Right ventricle myocardium inferior (tissue), 1 donor: ENCODE measurements at regions of chr7 and their contacts with region 1.

Region 1: DNA sequence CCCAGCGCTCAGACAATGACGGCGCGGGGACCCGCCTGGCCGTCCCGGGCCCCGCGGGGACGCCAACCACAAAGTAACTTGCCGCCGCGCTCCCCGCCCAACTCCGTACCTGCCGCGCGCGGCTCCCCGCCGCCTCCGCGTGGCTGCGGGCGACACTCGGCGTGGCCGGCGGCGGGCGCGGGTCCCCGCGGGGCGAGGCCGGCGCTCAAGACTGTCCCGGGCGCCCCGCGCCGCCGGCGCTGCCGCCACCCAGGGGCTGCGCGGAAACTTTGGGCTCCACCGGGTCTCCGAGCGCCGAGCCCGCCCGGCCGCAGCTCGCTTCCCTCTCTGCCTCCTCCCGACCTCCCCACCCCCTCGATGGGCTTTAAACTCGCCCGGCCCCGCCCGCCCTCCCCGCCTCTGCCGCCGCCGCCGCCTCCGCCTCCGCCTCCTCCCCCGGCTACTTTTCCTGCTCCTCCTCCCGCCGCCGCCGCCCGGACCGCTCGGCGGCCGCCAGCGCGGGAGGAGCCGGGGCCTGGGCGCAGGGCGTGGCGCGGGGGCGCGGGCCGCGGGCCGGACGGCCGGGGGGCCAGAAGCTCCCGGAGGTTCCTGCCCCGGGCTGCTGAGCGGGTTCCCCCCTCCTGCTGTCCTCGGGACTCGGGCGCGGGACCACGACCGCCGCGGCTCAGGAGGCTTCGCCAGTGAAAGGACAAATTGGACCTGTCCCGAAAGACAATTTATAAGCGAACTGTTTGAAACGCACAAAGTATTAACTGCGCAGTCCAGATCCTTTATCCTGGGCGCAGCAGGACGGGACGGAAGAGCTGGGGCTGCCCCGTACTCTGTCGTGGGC is 10.6 kb upstream of the GRB10 start:
- DNase-seq: peak; percentile 82
- ATAC-seq: peak; percentile 90

Region 2: GRCh38 chr7:50449881-50450589 is 343.3 kb before region 1 on chr7 and contains the start of gene FIGNL1:
- intact Hi-C with region 1: loop called (anchors 10 kb)
- DNase-seq: peak; percentile 92
- ATAC-seq: peak; percentile 99
- total RNA-seq, gene FIGNL1: 3.4 TPM

Region 3: DNA sequence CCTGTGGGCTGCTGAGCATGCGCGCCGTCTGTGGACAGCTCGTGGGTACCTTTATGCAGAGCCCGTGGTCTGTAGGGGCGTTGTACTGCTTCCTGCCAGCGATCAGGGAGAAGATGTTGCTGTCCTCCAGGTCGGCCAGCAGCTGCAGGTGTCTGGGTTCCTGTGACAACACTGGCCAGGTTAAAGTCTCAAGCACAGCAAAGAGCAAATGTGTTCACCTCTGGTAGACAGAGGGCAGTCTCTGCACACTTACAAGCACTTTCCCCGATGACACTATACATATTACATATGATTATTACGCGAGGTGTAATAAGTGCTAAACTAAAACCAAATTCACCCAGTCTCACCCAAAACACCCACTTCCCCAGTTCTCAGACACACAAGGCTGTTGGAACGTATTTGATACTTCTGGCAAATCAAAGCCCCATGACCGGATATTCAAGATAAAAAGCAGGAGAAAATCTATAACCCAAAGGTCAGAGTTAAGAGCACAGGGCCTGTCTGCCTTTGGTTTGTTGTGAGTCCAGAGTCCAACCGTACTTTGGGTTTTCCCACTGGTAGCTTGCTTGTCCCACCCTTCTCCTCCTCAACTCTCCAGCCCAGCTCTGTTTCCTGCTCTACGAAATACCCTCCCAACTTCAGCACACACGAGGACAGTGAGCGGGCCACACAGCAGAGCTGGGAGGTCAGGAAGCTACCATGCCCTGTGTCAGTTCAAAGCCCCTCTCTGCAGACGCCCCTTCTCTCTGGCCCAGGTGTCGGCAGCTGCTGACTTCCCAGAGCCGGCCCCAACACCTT is 178.4 kb before region 1 on chr7:
- intact Hi-C with region 1: loop called (anchors 5 kb)
- DNase-seq: no peak
- ATAC-seq: peak; percentile 47

Region 4: GRCh38 chr7:50687575-50688225 is 105.6 kb before region 1 on chr7:
- intact Hi-C with region 1: loop called (anchors 5 kb)
- DNase-seq: no peak
- ATAC-seq: peak; percentile 74

Region 5: GRCh38 chr7:50721165-50721564 is 72.2 kb before region 1 on chr7:
- intact Hi-C with region 1: loop called (anchors 5 kb)
- DNase-seq: no peak
- ATAC-seq: no peak

Region 6: GRCh38 chr7:50739744-50740435 is 53.4 kb before region 1 on chr7:
- intact Hi-C with region 1: no loop called
- DNase-seq: no peak
- ATAC-seq: no peak

Region 7: DNA sequence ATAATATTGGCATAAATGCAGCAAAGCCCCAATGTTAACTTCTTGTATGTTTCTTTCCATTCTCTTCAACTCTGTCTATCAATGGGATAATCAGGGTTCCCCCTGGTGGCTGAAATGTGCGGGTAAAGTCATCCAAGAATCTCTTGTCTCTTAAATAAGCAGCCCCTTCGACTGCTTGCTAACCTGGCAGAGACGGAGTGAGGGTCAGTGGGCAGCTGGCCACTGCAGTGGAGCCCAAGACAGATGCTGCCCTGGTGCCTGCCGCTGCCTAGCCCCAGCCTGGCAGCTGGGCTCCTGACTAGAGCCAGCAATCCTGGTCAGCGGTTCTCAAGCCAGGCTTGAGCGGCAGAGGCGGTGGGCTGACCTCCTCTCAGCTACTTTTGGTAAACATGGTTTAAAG is 274.4 kb after region 1 on chr7:
- intact Hi-C with region 1: loop called (anchors 5 kb)
- DNase-seq: no peak
- ATAC-seq: peak; percentile 23

Region 8: DNA sequence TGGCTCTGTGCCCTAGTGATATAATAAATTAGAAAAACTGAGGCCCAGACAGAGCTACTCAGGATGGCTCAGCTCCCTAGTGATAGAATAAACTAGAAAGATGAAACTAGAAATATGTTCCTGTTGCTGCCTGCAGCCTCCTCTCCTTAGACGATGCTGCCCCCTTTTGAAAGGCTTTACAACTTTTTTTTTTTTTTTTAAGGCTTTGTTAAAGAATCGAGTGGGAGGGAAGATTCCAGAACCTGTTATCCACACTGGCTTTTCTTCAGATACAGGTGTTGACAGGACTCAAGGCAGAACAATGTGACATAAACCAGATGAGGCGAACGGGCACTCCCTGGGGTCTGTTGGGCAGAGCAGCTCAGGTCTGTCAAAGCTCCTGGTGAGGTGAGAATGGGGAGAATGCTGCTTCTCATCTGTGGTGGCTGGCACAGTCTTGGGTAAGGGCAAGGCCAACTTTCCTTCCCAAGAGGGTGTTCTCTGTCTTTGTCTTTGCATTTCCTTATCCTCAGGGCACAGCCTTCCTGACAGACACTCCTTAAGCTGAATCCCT is 348.2 kb after region 1 on chr7:
- intact Hi-C with region 1: loop called (anchors 2 kb)
- DNase-seq: no peak
- ATAC-seq: peak; percentile 72